GM18951 (cell line): ENCODE measurements at regions of chr2 and their contacts with region 1.

Region 1: GRCh38 chr2:149561309-149561926 is 26.2 kb downstream of the MMADHC start:
- POLR2A ChIP-seq: no peak

Region 2: GRCh38 chr2:147968571-147968970 is 1592.8 kb before region 1 on chr2:
- in situ Hi-C with region 1: loop called (anchors 25 kb)
- POLR2A ChIP-seq: no peak

Region 3: GRCh38 chr2:149017116-149017985 is 544.1 kb before region 1 on chr2:
- in situ Hi-C with region 1: loop called (anchors 10 kb)
- POLR2A ChIP-seq: no peak

Region 4: DNA sequence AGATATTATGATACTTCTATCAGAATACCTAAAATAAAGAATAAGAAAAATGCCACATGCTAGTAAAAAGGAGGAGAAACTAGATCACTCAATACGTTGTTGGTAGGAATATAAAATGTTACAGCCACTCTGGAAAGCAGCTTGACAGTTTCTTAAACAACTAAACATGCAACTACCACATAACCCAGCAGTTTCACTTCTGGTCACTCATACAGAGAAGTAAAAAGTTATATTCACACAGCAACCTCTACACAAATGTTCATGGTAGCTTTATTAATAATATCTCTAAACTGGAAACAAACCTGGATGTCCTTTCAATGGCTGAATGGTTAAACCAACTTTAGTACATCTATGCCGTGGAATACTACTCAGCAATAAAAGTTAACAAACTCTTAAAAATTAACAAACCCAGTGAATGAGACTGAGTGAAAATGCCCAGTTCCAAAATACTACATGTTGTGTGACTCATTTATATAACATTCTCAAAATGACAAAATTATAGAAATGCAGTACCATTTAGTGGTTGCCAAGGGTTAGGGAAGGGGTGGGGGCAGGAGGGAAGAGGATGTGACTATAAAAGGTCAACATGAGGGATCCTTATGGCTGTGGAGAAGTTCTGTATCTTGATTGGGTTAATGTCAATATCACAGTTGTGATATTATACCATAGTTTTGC is 98.0 kb before region 1 on chr2:
- in situ Hi-C with region 1: no loop called
- POLR2A ChIP-seq: no peak